GM10248 (cell line): ENCODE measurements at regions of chr22 and their contacts with region 1.

Region 1: DNA sequence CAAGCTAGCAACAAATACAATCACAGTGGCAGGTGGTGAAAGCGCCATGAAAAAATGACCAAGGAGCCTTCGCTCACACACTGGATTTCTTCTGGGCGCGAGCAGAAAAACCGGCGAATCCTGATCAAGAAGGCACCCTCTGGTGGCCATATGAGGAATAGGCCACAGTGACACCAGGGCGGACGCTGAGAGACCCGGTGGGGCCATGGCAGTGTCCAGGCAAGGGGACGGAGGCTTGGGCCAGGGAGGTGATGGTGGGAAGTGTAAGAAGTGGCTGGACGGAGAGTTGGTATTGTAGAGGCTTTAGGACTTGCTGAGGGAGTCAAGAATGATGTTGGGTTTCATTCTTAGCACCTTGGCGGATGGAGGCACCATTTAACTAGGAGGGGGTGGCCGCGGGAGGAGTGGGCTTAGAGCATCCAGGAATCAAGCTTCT is 16.9 kb upstream of the RAC2 start:
- DNase-seq: peak; percentile 77
- CTCF ChIP-seq: peak; percentile 86

Region 2: GRCh38 chr22:37098976-37099591 is 161.8 kb before region 1 on chr22:
- CTCF ChIA-PET with region 1: no interaction called
- POLR2A ChIA-PET with region 1: no interaction called
- DNase-seq: no peak
- CTCF ChIP-seq: peak; percentile 15

Region 3: GRCh38 chr22:37121887-37122591 is 138.9 kb before region 1 on chr22:
- CTCF ChIA-PET with region 1: interaction called, 22 read pairs
- POLR2A ChIA-PET with region 1: no interaction called
- DNase-seq: peak; percentile 90
- CTCF ChIP-seq: no peak

Region 4: DNA sequence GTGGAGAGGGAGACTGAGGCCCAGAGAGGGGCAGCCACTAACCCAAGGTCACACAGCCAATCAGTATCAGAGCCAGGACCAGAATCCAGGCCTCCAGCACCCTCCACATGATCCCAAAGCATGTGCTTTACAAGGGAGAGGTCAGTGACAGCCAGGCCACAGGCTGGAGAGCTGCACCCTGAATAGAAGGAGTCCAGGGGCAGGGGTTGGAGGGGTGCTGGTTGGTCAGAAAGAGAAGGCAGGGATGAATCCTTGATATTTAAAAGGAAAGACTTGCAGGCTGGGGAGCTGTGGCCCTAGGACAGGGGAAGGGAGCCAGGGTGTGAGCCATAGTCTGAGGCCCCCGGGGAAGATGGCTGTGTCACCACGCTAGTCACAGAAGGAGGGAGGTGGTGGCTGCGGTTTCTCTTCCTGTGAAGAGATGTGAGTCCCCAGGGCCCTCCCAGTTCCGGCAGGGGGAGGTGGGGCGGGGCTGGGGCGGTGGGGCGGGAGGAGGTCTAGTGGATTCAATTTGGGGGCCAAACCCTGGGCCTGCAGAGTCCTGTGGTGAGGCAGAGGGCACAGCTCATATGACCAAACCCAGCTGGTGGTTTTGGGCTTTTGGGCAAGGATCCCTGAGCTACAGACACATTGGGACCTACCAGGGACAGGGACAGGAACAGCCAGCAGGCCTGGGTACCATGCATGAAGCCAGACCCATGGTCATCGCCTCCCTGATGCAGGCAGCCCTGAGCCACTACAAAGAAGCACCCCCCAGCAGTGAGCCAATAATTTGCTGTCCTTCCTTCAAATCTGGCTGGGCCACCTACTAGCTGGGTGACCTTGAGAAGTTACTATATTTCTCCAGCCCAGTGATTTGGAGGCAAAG is 30.9 kb before region 1 on chr22:
- CTCF ChIA-PET with region 1: interaction called, 21 read pairs
- POLR2A ChIA-PET with region 1: no interaction called
- DNase-seq: peak; percentile 88
- CTCF ChIP-seq: no peak

Region 5: GRCh38 chr22:37273126-37273845 is 12.4 kb after region 1 on chr22:
- CTCF ChIA-PET with region 1: interaction called, 55 read pairs
- POLR2A ChIA-PET with region 1: no interaction called
- DNase-seq: peak; percentile 66
- CTCF ChIP-seq: no peak

Region 6: GRCh38 chr22:37309211-37310074 is 48.5 kb after region 1 on chr22:
- CTCF ChIA-PET with region 1: interaction called, 26 read pairs
- POLR2A ChIA-PET with region 1: no interaction called
- DNase-seq: peak; percentile 65
- CTCF ChIP-seq: no peak